ENCODE measurements at regions of chr12 and their contacts with region 1.

Region 1: GRCh38 chr12:50084775-50085614 is at the start of gene SMARCD1:
- DNase-seq: peak; percentile 66
- ATAC-seq: peak; percentile 91
- H3K4me3 ChIP-seq: peak within 1 kb of the TSS; percentile 76
- H3K27ac ChIP-seq: peak within 1 kb of the TSS; percentile 85
- H3K4me1 ChIP-seq: no peaks in the 10 kb centered on the region
- H3K27me3 ChIP-seq: no peaks in the 10 kb centered on the region
- CTCF ChIP-seq: peak; percentile 65 to 92 (median 72)
- EP300 ChIP-seq: no peak; a peak in 1 of 4 replicates
- POLR2A ChIP-seq: peak; percentile 78
- RAD21 ChIP-seq: no peak
- polyA plus RNA-seq, gene SMARCD1: 1.4 to 2.9 TPM

Region 2: GRCh38 chr12:50025187-50026059 is 59.6 kb before region 1 on chr12 and contains the start of gene RACGAP1:
- CTCF ChIA-PET with region 1: interaction called, 10 read pairs
- POLR2A ChIA-PET with region 1: interaction called, 5 read pairs
- RAD21 ChIA-PET with region 1: interaction called, 8 read pairs
- SMC1A ChIA-PET with region 1: no interaction called
- in situ Hi-C with region 1: no loop called
- intact Hi-C with region 1: no loop called
- DNase-seq: peak; percentile 98
- ATAC-seq: peak; percentile 98
- H3K4me3 ChIP-seq: peak within 1 kb of the TSS; percentile 96
- H3K27ac ChIP-seq: peak within 1 kb of the TSS; percentile 71
- H3K4me1 ChIP-seq: 0 out of 2 replicates have a peak, but pooled peaks cover 3% of the 10 kb centered on the region
- H3K27me3 ChIP-seq: no peaks in the 10 kb centered on the region
- CTCF ChIP-seq: no peak
- EP300 ChIP-seq: no peak
- POLR2A ChIP-seq: peak; percentile 89
- RAD21 ChIP-seq: no peak
- polyA plus RNA-seq, gene RACGAP1: 32.4 to 40.7 TPM

Region 3: GRCh38 chr12:50127546-50127945 is 42.6 kb after region 1 on chr12:
- CTCF ChIA-PET with region 1: interaction called, 21 read pairs
- POLR2A ChIA-PET with region 1: no interaction called
- RAD21 ChIA-PET with region 1: interaction called, 5 read pairs
- SMC1A ChIA-PET with region 1: interaction called, 5 read pairs
- in situ Hi-C with region 1: no loop called
- intact Hi-C with region 1: no loop called
- DNase-seq: no peak
- ATAC-seq: no peak
- H3K4me3 ChIP-seq: no peak overlapping the region
- H3K27ac ChIP-seq: no peak overlapping the region
- H3K4me1 ChIP-seq: peaks cover 11% of the 10 kb centered on the region; the same call in 1 of the 2 replicates
- H3K27me3 ChIP-seq: no peaks in the 10 kb centered on the region
- CTCF ChIP-seq: no peak
- EP300 ChIP-seq: no peak
- POLR2A ChIP-seq: no peak
- RAD21 ChIP-seq: no peak

Region 4: DNA sequence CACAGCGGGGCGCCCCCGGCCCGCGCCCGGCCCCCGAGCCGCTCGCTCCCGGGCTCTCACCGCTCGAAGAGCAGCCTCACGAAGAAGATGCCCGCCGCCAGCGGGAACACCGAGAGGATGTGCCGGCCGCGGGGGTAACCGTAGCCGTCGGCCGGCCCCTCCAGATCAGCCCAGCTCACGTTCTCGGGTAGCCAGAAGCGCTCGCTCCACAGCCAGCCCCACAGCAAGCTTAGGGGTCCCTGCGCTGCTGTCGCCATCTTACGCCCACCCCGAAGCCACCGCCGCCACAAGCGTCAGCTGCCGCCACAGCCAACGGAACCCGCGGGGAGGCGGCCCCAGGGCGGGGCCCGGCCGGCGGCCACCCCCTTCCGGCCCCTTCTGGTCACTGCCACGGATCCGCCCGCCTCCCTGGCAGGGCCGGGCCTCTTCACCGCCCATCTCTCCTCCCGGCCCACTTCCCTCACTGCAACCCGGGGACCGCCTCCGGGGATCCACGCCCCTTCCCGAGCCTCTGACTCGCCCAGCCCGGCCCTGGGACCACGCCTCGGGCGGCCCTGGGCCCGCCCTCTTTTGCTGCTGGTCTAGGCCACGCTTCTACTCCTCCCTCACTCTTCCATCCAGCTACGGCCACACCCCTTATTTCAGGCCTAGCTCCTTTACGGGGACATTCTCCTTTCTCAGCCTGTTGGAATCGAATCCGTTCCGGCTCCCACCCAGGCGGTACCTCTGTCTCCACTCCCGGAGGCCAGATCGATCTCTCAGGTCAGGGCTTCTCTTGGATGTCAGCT is 82.2 kb after region 1 on chr12 and contains the start of gene CERS5:
- CTCF ChIA-PET with region 1: interaction called, 97 read pairs
- POLR2A ChIA-PET with region 1: interaction called, 8 read pairs
- RAD21 ChIA-PET with region 1: interaction called, 13 read pairs
- SMC1A ChIA-PET with region 1: interaction called, 7 read pairs
- in situ Hi-C with region 1: loop called (anchors 5 kb)
- intact Hi-C with region 1: loop called (anchors 2 kb)
- DNase-seq: peak; percentile 85
- ATAC-seq: peak; percentile 99
- H3K4me3 ChIP-seq: peak within 1 kb of the TSS; percentile 80
- H3K27ac ChIP-seq: peak within 1 kb of the TSS; percentile 71
- H3K4me1 ChIP-seq: no peaks in the 10 kb centered on the region
- H3K27me3 ChIP-seq: no peaks in the 10 kb centered on the region
- CTCF ChIP-seq: no peak
- EP300 ChIP-seq: peak in 1 of 2 experiments; percentile 22; a peak in 1 of 4 replicates
- POLR2A ChIP-seq: peak; percentile 87
- RAD21 ChIP-seq: no peak
- polyA plus RNA-seq, gene CERS5: 6.8 to 12.2 TPM

Region 5: GRCh38 chr12:50234347-50234746 is 149.4 kb after region 1 on chr12:
- CTCF ChIA-PET with region 1: no interaction called
- POLR2A ChIA-PET with region 1: no interaction called
- RAD21 ChIA-PET with region 1: no interaction called
- SMC1A ChIA-PET with region 1: no interaction called
- in situ Hi-C with region 1: no loop called
- intact Hi-C with region 1: no loop called
- DNase-seq: no peak
- ATAC-seq: peak; percentile 76
- H3K4me3 ChIP-seq: no peak overlapping the region
- H3K27ac ChIP-seq: no peak overlapping the region
- H3K4me1 ChIP-seq: no peaks in the 10 kb centered on the region
- H3K27me3 ChIP-seq: no peaks in the 10 kb centered on the region
- CTCF ChIP-seq: no peak
- EP300 ChIP-seq: no peak
- POLR2A ChIP-seq: no peak
- RAD21 ChIP-seq: no peak

Region 6: DNA sequence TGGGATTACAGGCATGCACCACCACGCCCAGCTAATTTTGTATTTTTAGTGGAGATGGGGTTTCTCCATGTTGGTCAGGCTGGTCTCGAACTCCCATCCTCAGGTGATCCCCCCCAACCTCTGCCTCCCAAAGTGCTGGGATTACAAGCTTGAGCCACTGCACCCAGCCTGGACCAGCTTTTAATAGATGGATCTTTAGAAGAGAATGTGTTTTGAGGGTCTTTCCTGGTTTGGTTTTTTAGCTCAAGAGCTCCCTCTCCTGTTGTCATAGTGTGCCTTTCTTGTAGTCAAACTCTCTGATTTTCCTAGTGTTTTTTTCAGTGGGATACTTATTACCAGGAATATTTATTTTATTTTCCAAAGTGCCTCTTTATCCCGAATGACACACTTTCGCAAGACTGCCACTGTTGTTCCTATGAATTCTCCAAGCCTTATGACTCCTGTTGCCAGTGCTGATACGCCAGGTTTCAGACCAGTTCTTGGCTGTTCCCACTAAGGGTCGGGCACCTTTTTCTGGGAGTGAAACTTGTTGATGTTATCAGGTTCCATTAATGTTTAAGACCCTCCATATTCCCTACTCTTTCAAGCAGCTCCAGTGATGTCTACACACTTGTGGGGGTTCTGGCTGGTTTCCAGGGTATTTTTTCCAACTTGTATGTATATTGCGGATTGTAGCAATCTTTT is 229.8 kb after region 1 on chr12:
- CTCF ChIA-PET with region 1: interaction called, 19 read pairs
- POLR2A ChIA-PET with region 1: no interaction called
- RAD21 ChIA-PET with region 1: interaction called, 8 read pairs
- SMC1A ChIA-PET with region 1: interaction called, 10 read pairs
- in situ Hi-C with region 1: loop called (anchors 5 kb)
- intact Hi-C with region 1: no loop called
- DNase-seq: no peak
- ATAC-seq: peak; percentile 62
- H3K4me3 ChIP-seq: no peak overlapping the region
- H3K27ac ChIP-seq: no peak overlapping the region
- H3K4me1 ChIP-seq: no peaks in the 10 kb centered on the region
- H3K27me3 ChIP-seq: no peaks in the 10 kb centered on the region
- CTCF ChIP-seq: peak; percentile 44 to 63 (median 51); a peak in 5 of 6 replicates
- EP300 ChIP-seq: no peak
- POLR2A ChIP-seq: no peak
- RAD21 ChIP-seq: peak; percentile 83

Measured in GM12878 (cell line).